Astrocyte of the cerebellum (primary cell): ENCODE measurements at regions of chr5 and their contacts with region 1.

Region 1: GRCh38 chr5:52771343-52772039 is 16.2 kb upstream of the ITGA1 start:
- DNase-seq: no peak
- H3K4me3 ChIP-seq: no peak overlapping the region
- CTCF ChIP-seq: no peak

Region 2: GRCh38 chr5:51439232-51439631 is 1332.3 kb before region 1 on chr5:
- in situ Hi-C with region 1: no loop called
- DNase-seq: no peak
- H3K4me3 ChIP-seq: no peak overlapping the region
- CTCF ChIP-seq: no peak

Region 3: GRCh38 chr5:51684794-51685355 is 1086.6 kb before region 1 on chr5:
- in situ Hi-C with region 1: no loop called
- DNase-seq: no peak
- H3K4me3 ChIP-seq: no peak overlapping the region
- CTCF ChIP-seq: peak; percentile 3

Region 4: GRCh38 chr5:52709171-52709925 is 62.1 kb before region 1 on chr5:
- in situ Hi-C with region 1: loop called (anchors 10 kb)
- DNase-seq: peak; percentile 40
- H3K4me3 ChIP-seq: no peak overlapping the region
- CTCF ChIP-seq: no peak

Region 5: DNA sequence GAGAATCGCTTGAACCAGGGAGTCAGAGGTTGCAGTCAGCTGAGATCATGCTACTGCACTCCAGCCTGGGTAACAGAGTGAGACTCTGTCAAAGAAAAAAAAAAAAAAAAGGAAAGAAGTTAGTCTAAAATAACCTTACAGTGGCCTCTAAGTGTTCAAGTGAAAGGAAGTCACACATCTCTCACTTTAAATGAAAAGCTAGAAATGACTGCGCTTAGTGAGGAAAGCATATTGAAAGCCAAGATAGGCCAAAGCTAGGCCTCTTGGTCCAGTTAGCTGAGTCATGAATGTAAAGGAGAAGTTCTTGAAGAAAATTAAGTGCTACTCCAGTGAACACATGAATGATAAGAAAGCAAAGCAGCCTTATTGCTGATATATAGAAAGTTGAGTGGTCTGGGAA is 54.3 kb after region 1 on chr5:
- in situ Hi-C with region 1: no loop called
- DNase-seq: no peak
- H3K4me3 ChIP-seq: no peak overlapping the region
- CTCF ChIP-seq: no peak